ENCODE measurements at regions of chr9 and their contacts with region 1.

Region 1: DNA sequence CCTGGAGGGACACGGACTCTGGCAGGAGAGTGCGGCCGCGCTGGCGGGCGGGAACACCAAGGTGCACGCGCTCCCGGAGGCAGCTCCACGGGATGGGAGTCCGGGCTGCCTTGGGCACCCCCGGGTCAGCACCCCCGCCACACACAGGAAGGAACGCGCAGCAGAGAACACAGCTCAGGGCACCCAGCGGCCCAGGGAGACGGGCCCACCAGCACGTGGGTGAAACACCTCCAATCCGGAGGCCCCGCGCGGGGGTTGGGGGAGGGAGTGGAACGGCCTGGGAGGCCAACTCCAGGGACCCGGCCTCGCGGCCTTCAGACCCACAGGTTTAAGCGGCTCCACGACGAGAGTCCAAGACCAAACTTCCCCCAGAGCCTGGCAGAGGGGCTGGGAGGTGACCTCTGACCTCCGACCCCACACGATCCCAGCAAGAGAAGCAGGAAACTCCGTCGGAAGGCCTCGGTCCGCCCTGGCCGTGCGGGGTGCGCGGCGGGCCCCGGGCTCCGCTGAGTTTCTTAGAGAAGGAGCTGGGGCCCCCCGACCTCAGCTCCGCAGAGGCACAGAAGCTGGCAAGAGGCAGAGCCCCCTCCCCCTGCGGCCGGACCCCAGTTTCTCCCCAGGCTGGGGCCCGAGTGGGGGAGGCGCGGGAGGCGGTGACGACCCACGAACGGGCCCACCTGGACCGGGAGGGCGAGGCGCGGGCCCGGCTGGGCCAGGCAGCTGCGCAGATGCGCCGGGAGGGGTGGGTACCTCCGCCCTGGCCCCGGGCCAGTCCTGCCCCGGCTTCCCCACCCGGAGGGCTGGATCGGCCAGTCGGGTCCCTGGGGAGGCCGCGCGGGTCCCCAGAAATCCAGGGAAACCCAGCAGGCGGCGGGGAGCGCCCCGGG is 851 bp downstream of the NACC2 start:
- DNase-seq: peak; percentile 89

Region 2: GRCh38 chr9:136023410-136024225 is 70.6 kb before region 1 on chr9:
- intact Hi-C with region 1: no loop called
- DNase-seq: peak; percentile 77

Region 3: GRCh38 chr9:136051517-136052432 is 42.5 kb before region 1 on chr9:
- intact Hi-C with region 1: loop called (anchors 5 kb)
- DNase-seq: peak; percentile 82